Activated B cell treated with CpG ODN at 0.5 μM for 24 hours (primary cell): ENCODE measurements at regions of chr20 and their contacts with region 1.

Region 1: DNA sequence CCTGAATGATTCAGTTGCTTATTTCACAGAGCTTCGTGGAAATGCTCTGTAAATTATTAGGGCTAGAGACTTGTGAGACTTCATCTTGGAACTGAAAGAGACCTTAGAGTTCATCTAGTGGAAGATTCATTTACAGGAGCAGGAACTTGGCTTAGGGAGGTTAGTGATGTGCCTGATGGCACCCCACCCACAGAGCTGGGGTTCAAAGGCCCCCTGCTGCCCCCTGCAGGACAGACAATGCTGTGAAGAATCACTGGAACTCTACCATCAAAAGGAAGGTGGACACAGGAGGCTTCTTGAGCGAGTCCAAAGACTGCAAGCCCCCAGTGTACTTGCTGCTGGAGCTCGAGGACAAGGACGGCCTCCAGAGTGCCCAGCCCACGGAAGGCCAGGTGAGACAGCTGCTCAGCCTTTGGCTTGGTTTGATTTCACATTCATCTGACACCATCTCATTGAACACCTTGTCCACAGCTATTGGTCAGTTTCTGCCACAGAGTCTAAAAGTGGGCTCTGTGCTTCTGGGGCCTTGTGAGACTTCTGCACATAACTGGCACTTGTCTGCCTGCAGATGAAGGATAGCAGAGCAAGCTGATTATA is 25.1 kb downstream of the MYBL2 start:
- DNase-seq: peak; percentile 63
- ATAC-seq: peak; percentile 89
- H3K4me3 Mint-ChIP-seq: no peak overlapping the region
- H3K27ac Mint-ChIP-seq: peak overlapping the region; percentile 6
- H3K4me1 Mint-ChIP-seq: peaks cover 21% of the 10 kb centered on the region
- H3K27me3 Mint-ChIP-seq: no peaks in the 10 kb centered on the region
- CTCF ChIP-seq: peak; percentile 38

Region 2: DNA sequence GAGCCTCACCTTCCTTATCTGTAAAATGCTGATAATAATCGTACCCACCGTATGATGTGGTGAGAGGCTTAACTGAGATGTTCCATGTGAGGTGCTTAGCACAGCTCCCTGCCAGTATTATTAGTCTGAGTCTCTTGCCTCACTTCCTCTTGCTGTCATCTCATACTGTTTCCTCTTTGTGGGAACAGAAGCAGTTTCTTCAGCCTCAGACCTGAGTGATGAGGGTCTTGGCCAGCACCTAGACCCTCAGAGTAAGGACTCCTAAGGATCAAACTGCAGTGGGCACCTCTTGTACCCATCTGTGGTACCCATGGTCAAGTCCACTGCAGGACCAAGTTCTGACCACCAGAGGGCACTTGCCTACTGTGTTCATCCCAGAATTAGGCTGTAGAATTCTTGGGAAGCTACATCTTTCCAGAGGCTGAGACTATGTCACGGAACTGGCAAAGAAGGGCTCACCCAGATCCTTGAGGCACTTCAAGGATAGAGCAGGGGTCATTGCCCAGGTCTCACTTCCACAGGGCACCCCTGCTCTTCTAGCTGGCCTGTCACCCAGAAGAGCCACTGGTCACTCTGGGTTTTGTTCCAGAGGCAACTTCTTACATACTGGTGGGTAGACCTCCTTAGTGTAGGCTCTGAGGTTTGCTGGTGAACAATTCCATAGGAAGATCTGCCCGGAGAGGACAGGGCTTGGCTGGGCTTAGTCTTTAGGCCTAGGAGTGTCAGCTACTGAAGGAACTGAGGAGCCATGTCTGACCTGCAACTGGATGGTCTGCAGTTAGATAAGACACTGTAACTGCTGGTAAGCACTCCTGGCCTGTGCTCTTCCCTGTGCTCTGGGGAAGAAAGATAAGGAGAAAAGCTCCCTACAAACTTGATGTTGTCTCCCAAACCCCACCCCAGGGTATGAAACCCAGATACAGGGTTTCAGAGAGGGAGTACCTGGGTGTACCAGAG is 153.8 kb before region 1 on chr20:
- CTCF ChIA-PET with region 1: interaction called, 97 read pairs
- POLR2A ChIA-PET with region 1: interaction called, 11 read pairs
- intact Hi-C with region 1: loop called (anchors 1 kb)
- DNase-seq: peak; percentile 30
- ATAC-seq: peak; percentile 65
- H3K4me3 Mint-ChIP-seq: no peak overlapping the region
- H3K27ac Mint-ChIP-seq: no peak overlapping the region
- H3K4me1 Mint-ChIP-seq: no peaks in the 10 kb centered on the region
- H3K27me3 Mint-ChIP-seq: no peaks in the 10 kb centered on the region
- CTCF ChIP-seq: peak; percentile 52

Region 3: GRCh38 chr20:43590392-43591323 is 101.4 kb before region 1 on chr20 and contains the start of gene IFT52:
- CTCF ChIA-PET with region 1: interaction called, 10 read pairs
- POLR2A ChIA-PET with region 1: no interaction called
- intact Hi-C with region 1: loop called (anchors 1 kb)
- DNase-seq: peak; percentile 83
- ATAC-seq: peak; percentile 97
- H3K4me3 Mint-ChIP-seq: peak within 1 kb of the TSS; percentile 94
- H3K27ac Mint-ChIP-seq: peak within 1 kb of the TSS; percentile 95
- H3K4me1 Mint-ChIP-seq: peaks cover 17% of the 10 kb centered on the region
- H3K27me3 Mint-ChIP-seq: peaks cover 2% of the 10 kb centered on the region
- CTCF ChIP-seq: no peak
- total RNA-seq, gene IFT52: 18.7 and 20.8 TPM in 2 replicates